Activated CD8-positive, alpha-beta T cell treated with anti-CD3 and anti-CD28 coated beads for 36 hours (primary cell): ENCODE measurements at regions of chr2 and their contacts with region 1.

Region 1: DNA sequence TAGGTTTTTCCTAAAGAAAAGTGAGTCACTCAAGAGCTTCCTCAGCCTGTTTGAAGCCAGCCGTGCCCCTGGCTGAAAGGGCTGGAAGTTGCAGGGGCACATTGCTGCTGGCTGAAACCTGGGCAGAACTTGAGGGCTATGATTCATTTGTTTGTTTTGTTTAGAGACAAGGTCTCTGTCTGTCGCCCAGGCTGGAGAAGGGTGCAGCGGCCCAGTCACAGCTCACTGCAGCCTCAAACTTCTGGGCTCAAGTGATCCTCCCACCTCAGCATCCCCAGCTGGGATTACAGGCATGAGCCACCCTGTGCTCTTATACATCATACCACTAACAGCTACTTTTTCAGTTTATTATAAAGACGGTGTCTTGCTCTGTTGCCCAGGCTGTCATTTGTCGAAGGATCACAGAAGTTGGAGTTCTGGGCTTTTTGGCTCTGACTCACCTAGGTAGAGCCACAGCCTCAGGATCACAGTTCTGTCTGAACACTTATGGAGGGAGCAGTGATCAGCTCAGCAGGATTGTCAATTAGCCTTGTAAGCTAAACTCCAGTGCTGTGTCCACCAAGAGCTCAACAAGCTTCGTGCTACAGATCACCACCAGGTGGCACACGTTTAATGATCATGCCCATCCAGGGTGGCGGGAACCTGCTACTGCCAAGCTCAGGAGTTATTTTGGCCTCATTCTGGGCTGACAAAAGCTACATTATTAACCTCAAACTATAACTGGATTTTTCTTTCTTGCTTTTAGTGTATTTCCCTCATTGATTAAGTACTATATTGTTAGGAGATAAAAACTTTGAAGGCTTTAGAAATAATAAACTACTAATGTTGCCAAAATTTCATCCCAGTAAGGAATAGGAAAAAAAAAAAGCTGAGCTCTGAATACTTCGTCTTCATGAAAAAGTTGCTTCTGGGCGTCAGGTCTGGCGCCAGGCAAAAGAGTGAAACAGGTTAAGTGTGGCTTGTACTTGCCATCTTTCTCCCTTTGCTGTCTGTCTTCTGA is 57.9 kb downstream of the ARHGEF33 start:
- DNase-seq: peak; percentile 89
- ATAC-seq: peak; percentile 87
- H3K4me3 Mint-ChIP-seq: no peak overlapping the region
- H3K27ac Mint-ChIP-seq: no peak overlapping the region
- H3K4me1 Mint-ChIP-seq: no peaks in the 10 kb centered on the region
- H3K27me3 Mint-ChIP-seq: no peaks in the 10 kb centered on the region
- CTCF ChIP-seq: peak; percentile 76

Region 2: GRCh38 chr2:38791744-38792143 is 155.8 kb before region 1 on chr2:
- CTCF ChIA-PET with region 1: no interaction called
- POLR2A ChIA-PET with region 1: no interaction called
- intact Hi-C with region 1: no loop called
- DNase-seq: no peak
- ATAC-seq: no peak
- H3K4me3 Mint-ChIP-seq: no peak overlapping the region
- H3K27ac Mint-ChIP-seq: no peak overlapping the region
- H3K4me1 Mint-ChIP-seq: no peaks in the 10 kb centered on the region
- H3K27me3 Mint-ChIP-seq: no peaks in the 10 kb centered on the region
- CTCF ChIP-seq: no peak

Region 3: DNA sequence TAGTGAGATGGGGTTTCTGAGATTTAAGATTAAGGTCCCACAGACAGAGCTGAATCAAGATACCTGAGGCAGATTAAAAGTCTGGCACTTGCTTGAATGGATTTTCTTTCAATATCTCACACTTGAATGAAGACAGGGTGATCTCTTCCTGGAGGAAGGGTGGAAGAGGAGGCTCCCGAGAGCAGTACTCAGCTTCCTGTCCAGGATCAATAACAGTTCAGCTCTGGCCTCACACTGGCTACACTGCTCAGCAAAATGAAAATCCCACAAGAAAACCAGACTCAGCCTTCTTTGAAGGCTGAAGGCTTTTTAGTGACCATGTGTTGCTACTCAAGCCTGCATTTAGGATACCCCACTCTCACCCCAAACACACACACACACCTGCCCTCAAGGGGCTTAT is 46.8 kb before region 1 on chr2:
- CTCF ChIA-PET with region 1: interaction called, 10 read pairs
- POLR2A ChIA-PET with region 1: no interaction called
- intact Hi-C with region 1: no loop called
- DNase-seq: no peak
- ATAC-seq: no peak
- H3K4me3 Mint-ChIP-seq: no peak overlapping the region
- H3K27ac Mint-ChIP-seq: no peak overlapping the region
- H3K4me1 Mint-ChIP-seq: no peaks in the 10 kb centered on the region
- H3K27me3 Mint-ChIP-seq: no peaks in the 10 kb centered on the region
- CTCF ChIP-seq: no peak

Region 4: DNA sequence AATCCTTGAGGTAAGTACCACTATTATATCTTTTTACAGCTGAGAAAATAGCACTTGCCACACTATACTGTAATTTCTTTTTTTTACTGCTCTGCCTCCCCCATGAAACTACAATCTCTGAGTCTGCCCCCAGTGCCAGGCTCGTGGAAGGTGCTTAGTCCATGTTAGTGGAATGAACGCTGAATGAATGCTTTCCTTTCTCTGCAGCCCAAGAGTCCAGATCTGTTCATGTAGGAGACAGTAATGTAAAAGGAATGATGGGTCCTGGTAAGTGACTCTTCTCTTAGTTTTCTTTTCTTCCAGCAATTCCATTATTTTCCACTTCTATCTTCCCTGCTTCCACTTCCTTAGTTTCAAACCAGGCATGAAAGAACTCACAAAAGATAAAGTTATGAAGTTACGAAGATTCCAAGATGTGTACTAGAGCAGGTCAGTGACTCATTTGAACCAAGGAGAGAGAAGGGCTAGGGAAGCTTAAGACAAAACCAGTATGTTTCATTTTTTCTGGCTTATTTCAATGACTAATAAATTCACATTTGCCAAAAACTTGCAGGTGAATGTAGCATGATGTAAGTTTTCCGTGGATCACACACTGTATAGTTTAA is 11.9 kb before region 1 on chr2:
- CTCF ChIA-PET with region 1: interaction called, 20 read pairs
- POLR2A ChIA-PET with region 1: no interaction called
- intact Hi-C with region 1: no loop called
- DNase-seq: no peak
- ATAC-seq: no peak
- H3K4me3 Mint-ChIP-seq: no peak overlapping the region
- H3K27ac Mint-ChIP-seq: no peak overlapping the region
- H3K4me1 Mint-ChIP-seq: peaks cover 5% of the 10 kb centered on the region
- H3K27me3 Mint-ChIP-seq: no peaks in the 10 kb centered on the region
- CTCF ChIP-seq: no peak

Region 5: GRCh38 chr2:38971377-38971776 is 23.8 kb after region 1 on chr2:
- CTCF ChIA-PET with region 1: interaction called, 11 read pairs
- POLR2A ChIA-PET with region 1: no interaction called
- intact Hi-C with region 1: no loop called
- DNase-seq: no peak
- ATAC-seq: no peak
- H3K4me3 Mint-ChIP-seq: no peak overlapping the region
- H3K27ac Mint-ChIP-seq: no peak overlapping the region
- H3K4me1 Mint-ChIP-seq: no peaks in the 10 kb centered on the region
- H3K27me3 Mint-ChIP-seq: no peaks in the 10 kb centered on the region
- CTCF ChIP-seq: no peak

Region 6: DNA sequence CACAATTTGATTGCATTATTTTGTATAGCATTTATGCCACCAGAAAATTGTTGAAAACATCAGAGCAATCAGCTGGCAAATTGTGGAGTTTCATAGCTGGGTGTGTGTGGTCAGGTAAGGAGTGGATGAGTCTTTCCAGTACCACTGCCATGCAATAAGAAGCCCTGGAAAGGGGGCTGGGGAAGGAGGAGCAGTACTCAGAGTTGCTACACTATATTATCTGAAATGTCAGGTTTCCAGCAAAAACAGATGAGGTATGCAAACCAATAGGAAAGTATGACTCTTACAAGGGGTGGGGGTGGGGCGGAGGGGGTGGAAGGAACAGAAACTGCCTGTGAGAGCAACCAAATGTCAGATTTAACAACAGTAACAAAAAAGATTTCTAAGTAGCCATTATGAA is 61.1 kb after region 1 on chr2:
- CTCF ChIA-PET with region 1: interaction called, 13 read pairs
- POLR2A ChIA-PET with region 1: no interaction called
- intact Hi-C with region 1: no loop called
- DNase-seq: peak; percentile 40
- ATAC-seq: peak; percentile 56
- H3K4me3 Mint-ChIP-seq: no peak overlapping the region
- H3K27ac Mint-ChIP-seq: peak overlapping the region; percentile 72
- H3K4me1 Mint-ChIP-seq: peaks cover 19% of the 10 kb centered on the region
- H3K27me3 Mint-ChIP-seq: no peaks in the 10 kb centered on the region
- CTCF ChIP-seq: no peak

Region 7: GRCh38 chr2:39059366-39059952 is 111.9 kb after region 1 on chr2:
- CTCF ChIA-PET with region 1: interaction called, 24 read pairs
- POLR2A ChIA-PET with region 1: no interaction called
- intact Hi-C with region 1: no loop called
- DNase-seq: no peak
- ATAC-seq: no peak
- H3K4me3 Mint-ChIP-seq: no peak overlapping the region
- H3K27ac Mint-ChIP-seq: no peak overlapping the region
- H3K4me1 Mint-ChIP-seq: peaks cover 12% of the 10 kb centered on the region
- H3K27me3 Mint-ChIP-seq: no peaks in the 10 kb centered on the region
- CTCF ChIP-seq: peak; percentile 82

Region 8: GRCh38 chr2:39080152-39080551 is 132.6 kb after region 1 on chr2:
- CTCF ChIA-PET with region 1: no interaction called
- POLR2A ChIA-PET with region 1: no interaction called
- intact Hi-C with region 1: no loop called
- DNase-seq: no peak
- ATAC-seq: no peak
- H3K4me3 Mint-ChIP-seq: no peak overlapping the region
- H3K27ac Mint-ChIP-seq: no peak overlapping the region
- H3K4me1 Mint-ChIP-seq: peaks cover 29% of the 10 kb centered on the region
- H3K27me3 Mint-ChIP-seq: no peaks in the 10 kb centered on the region
- CTCF ChIP-seq: no peak